ENCODE measurements at regions of chr10 and their contacts with region 1.

Region 1: GRCh38 chr10:74947781-74948401 is 121.5 kb downstream of the KAT6B start:
- DNase-seq: no peak

Region 2: DNA sequence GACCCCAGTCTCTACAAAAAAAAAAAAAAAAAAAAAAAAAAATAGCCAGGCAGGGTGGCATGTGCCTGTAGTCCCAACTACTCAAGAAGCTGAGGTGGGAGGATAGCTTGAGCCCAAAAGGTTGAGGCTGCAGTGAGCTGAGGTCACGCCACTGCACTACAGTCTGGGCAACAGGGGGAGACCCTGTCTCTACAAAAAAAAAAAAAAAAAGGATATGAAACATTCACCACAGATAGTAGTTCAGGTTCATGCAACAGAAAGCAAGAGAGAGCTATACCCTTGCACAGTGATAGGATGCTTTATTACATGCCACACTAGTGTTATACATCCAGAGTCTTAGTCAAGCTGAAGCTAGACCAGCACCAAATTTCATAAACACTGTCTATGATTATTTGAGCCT is 269.9 kb before region 1 on chr10:
- CTCF ChIA-PET with region 1: no interaction called
- POLR2A ChIA-PET with region 1: no interaction called
- DNase-seq: no peak

Region 3: GRCh38 chr10:74825371-74826141 is 122.3 kb before region 1 on chr10:
- CTCF ChIA-PET with region 1: interaction called, 11 read pairs
- POLR2A ChIA-PET with region 1: interaction called, 3 read pairs
- DNase-seq: peak; percentile 42

Measured in HEK293T (cell line).